ENCODE measurements at regions of chr12 and their contacts with region 1.

Region 1: GRCh38 chr12:53251477-53252348 is 16.4 kb upstream of the ESPL1 start:
- DNase-seq: peak; percentile 76 to 85
- H3K4me3 ChIP-seq: peak overlapping the region; percentile 99
- H3K27ac ChIP-seq: peak overlapping the region; percentile 64
- H3K4me1 ChIP-seq: peaks cover 25% of the 10 kb centered on the region
- H3K27me3 ChIP-seq: no peaks in the 10 kb centered on the region
- CTCF ChIP-seq: peak; percentile 58

Region 2: DNA sequence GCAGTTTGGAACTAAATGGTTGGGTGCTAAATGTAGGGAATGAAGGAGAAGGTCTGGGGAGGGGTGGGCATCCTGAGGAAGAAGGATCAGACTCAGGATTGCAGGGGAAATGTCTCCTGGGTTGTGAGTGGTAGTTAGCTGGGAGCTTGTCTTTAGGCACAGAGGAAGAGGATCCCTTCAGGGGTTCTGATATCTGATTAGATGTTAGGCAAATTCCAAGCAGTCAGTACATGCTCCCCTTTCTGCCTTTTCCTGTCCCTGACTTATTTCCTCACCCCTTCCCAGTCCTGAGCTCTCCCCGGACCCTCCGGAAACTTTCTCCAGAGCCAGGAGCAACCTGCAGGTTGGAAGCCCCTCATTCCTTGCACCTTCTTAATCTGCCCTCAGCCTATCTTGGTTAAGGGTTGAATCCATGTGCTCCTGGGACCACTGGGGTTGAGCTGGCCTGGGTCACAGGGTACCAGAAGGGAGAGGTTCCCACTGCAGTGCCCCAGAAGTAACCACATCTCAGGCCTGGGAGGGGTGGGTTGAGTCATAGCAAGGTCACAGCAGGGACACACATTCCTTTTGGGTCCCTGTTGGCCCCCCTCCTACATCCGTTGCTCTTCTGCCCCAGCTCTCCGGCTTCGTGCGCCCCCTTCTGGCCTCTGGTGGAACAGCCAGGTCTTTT is 152.6 kb before region 1 on chr12:
- CTCF ChIA-PET with region 1: no interaction called
- POLR2A ChIA-PET with region 1: no interaction called
- intact Hi-C with region 1: loop called (anchors 1 kb)
- DNase-seq: peak; percentile 90 to 92
- H3K4me3 ChIP-seq: peak overlapping the region; percentile 96
- H3K27ac ChIP-seq: peak overlapping the region; percentile 87
- H3K4me1 ChIP-seq: peaks cover 22% of the 10 kb centered on the region
- H3K27me3 ChIP-seq: no peaks in the 10 kb centered on the region
- CTCF ChIP-seq: peak; percentile 95

Region 3: DNA sequence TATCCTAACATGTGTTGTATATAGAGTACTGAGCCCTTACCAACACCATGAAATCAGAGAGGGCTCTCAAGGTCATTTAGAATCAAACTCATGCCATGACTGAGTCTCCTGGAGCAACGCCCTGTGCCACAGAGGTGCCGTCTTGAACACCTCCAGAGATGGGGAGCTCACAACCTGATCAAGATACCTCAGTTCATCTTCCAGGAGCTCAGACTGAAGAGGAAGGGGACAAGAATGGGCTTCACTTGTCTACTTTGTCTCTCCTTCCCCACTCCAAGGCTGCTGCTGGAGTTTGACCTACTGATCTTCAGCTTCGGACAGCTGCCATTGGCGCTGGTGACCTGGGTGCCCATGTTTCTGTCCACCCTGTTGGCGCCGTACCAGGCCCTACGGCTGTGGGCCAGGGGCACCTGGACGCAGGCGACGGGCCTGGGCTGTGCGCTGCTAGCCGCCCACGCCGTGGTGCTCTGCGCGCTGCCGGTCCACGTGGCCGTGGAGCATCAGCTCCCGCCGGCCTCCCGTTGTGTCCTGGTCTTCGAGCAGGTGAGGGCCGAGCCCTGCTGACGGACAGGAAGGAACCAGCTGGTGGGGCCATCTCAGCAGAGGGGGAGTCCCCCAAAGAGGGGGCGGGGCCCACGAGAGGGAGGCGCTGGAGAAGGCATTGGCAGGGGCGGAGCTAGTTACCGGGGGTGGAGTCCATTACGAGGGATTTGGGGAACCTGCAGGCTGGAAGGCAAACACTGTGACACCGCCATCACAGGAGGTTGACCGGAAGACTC is 136.4 kb before region 1 on chr12:
- CTCF ChIA-PET with region 1: interaction called, 5 read pairs
- POLR2A ChIA-PET with region 1: interaction called, 18 read pairs
- intact Hi-C with region 1: no loop called
- DNase-seq: no peak
- H3K4me3 ChIP-seq: no peak overlapping the region
- H3K27ac ChIP-seq: no peak overlapping the region
- H3K4me1 ChIP-seq: no peaks in the 10 kb centered on the region
- H3K27me3 ChIP-seq: no peaks in the 10 kb centered on the region
- CTCF ChIP-seq: no peak

Region 4: DNA sequence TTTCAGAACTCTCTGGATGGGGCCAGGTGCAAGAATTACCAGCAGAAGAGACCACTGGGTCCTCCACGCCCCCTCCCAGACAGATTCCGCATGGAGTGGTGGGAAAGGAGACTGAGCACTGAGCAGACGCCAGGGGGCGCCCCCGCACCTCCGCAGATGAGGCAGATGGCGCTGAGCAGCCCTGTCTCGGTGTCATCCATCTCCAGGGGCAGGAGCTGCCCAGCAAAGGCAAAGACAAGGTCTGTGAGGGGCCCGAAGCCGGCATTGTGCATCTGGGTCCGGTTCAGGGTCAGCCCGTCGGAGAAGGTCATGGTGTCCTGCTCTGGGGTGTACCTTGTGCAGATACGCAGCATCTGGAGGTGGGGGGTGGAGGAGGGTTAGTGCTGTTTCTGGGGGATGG is 38.4 kb before region 1 on chr12:
- CTCF ChIA-PET with region 1: interaction called, 7 read pairs
- POLR2A ChIA-PET with region 1: no interaction called
- intact Hi-C with region 1: loop called (anchors 1 kb)
- DNase-seq: peak in 1 of 2 experiments; percentile 75
- H3K4me3 ChIP-seq: no peak overlapping the region
- H3K27ac ChIP-seq: no peak overlapping the region
- H3K4me1 ChIP-seq: peaks cover 30% of the 10 kb centered on the region
- H3K27me3 ChIP-seq: no peaks in the 10 kb centered on the region
- CTCF ChIP-seq: peak; percentile 92

Region 5: DNA sequence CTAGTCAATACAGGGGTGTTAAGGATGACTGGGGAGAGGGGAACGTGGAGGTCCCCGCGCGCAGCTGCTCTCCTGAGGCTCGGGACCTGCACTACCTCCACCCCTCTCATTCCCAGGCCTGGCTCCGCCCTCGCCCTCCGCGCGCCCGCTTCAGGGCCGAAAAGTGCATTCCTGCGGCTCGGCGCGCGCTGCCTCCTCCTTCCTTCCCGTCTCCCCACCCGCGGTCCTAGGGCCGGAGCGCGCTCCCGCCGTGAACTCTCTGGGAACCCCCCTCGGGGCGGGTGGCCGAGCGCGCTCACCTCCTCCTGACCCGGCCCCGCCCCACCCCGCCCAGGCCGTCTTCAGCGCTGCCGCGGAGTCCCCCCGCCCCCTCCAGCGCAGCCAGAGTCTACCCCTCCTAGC is 30.9 kb before region 1 on chr12:
- CTCF ChIA-PET with region 1: interaction called, 3 read pairs
- POLR2A ChIA-PET with region 1: interaction called, 5 read pairs
- intact Hi-C with region 1: loop called (anchors 1 kb)
- DNase-seq: peak; percentile 84 to 97
- H3K4me3 ChIP-seq: peak overlapping the region; percentile 68
- H3K27ac ChIP-seq: peak overlapping the region; percentile 96
- H3K4me1 ChIP-seq: peaks cover 79% of the 10 kb centered on the region
- H3K27me3 ChIP-seq: no peaks in the 10 kb centered on the region
- CTCF ChIP-seq: no peak

Region 6: DNA sequence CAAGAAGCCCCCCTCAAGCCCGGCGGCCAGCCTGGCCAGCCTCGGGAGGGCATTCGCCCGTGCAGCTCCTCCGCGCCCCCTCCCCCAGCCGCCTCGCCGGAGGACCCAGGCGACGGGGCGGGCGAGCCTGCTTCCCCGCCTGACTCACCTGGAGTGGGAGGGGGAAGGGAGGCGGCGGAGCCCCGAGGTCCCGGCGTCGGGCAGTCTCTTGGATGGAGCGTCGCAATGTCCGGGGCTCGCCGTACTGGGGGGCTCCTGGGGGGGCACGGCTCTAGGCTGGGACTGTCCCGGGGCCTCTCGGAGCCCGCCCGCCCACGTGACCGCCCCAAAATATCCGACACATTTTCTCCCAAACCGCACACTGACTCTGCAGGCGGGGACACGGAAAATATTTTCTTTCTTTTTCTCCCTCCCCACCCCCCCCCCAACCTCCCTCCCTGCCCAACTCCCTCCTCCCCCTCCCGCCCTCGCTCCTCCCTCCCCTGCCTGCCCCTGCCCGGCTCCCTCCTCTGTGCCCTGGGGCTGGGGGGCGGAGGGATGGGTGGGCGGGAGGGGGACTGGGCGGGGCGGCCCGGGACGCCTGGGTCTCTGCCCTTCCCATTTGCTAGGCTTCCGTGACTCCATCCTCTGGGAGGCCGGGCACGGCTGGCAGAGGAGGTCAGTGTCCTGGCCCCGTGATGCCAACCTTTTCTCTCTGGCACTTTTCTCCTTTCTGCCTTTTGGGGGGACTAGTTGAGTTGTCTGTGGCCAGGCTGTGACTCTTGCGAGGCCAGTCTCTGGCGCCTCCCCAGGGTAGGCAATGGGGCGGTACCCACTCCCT is 19.7 kb before region 1 on chr12 and contains the start of gene RARG:
- CTCF ChIA-PET with region 1: no interaction called
- POLR2A ChIA-PET with region 1: no interaction called
- intact Hi-C with region 1: loop called (anchors 1 kb)
- DNase-seq: peak; percentile 83 to 90
- H3K4me3 ChIP-seq: peak within 1 kb of the TSS; percentile 100
- H3K27ac ChIP-seq: peak within 1 kb of the TSS; percentile 71
- H3K4me1 ChIP-seq: peaks cover 59% of the 10 kb centered on the region
- H3K27me3 ChIP-seq: no peaks in the 10 kb centered on the region
- CTCF ChIP-seq: no peak
- total RNA-seq, gene RARG: 118 and 124 TPM in 2 replicates

Region 7: DNA sequence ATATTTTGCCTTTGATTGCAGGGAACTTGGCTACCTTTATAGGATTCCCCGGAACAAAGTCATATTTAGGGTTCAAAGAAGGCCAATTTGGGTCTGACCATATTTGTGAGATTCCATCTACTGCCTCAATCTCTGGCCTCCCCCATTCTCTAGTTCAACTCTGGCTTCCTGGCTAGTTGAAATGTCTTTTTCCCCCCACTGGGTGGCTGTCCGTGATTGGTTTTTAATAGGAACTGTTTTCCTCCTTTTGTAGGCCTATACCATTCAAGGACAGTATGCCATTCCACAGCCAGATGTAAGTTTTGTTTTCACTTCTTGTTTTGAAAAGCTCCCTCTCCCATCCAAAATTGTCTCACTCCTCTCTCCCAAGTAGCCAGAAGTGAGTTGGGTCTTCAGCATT is 214.0 kb after region 1 on chr12:
- CTCF ChIA-PET with region 1: no interaction called
- POLR2A ChIA-PET with region 1: no interaction called
- intact Hi-C with region 1: no loop called
- DNase-seq: no peak
- H3K4me3 ChIP-seq: no peak overlapping the region
- H3K27ac ChIP-seq: no peak overlapping the region
- H3K4me1 ChIP-seq: no peaks in the 10 kb centered on the region
- H3K27me3 ChIP-seq: no peaks in the 10 kb centered on the region
- CTCF ChIP-seq: no peak

Region 8: DNA sequence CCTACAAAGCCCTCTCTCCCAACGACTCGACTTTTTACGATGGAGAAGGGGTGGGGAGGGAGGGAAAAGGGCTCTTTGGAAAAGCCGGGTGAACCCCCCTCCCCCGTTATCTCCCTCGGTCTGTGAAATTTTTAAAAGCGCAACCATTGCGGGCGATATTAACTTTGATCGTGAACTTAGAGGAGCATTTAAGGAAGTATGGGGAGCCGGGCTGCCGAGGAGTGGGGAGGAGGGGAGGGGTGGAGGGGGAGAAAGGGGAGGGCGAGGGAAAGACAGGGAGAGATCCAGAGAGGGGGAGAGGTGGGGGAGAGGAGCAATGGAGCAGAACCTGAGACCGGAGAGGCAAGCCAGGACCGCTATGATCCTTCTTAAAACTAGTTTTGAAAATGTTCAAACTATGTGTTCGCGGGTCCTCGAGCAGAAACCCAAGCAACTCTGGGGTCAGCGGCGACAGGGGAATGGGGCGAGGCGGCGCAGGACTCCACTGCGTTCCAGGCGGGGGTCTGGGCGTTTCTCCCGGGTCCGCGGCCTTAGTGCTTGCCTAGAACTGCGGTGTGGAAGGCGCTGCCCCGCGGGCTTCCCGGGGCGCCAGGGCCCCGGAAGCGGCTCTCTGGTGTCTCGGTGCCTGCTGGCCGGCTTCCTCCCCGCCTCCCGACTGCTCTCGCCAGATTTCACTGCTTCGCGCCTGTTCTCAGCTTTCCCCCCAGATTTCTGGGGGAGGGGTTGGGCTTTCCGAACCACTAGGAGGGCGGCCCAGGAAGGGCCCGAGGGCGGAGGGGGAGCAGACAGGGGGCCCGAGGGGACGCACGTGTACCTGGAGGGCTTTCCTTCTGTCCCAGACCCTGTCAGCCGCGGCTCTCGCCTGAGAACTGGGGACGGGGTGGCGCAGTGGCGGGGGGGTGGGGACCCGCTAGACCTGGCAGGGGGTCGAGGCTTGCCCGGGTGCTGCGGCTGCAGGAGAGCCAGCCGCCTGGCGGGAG is 722.7 kb after region 1 on chr12 and contains the start of gene HOTAIR:
- CTCF ChIA-PET with region 1: interaction called, 10 read pairs
- POLR2A ChIA-PET with region 1: no interaction called
- intact Hi-C with region 1: no loop called
- DNase-seq: peak in 1 of 2 experiments; percentile 49
- H3K4me3 ChIP-seq: peak within 1 kb of the TSS; percentile 72
- H3K27ac ChIP-seq: peak within 1 kb of the TSS; percentile 49; the same call in 1 of the 2 replicates
- H3K4me1 ChIP-seq: no peaks in the 10 kb centered on the region
- H3K27me3 ChIP-seq: no peaks in the 10 kb centered on the region
- CTCF ChIP-seq: no peak
- total RNA-seq, gene HOTAIR: 7.9 and 9.2 TPM in 2 replicates